BJ (cell line): ENCODE measurements at regions of chr10 and their contacts with region 1.

Region 1: DNA sequence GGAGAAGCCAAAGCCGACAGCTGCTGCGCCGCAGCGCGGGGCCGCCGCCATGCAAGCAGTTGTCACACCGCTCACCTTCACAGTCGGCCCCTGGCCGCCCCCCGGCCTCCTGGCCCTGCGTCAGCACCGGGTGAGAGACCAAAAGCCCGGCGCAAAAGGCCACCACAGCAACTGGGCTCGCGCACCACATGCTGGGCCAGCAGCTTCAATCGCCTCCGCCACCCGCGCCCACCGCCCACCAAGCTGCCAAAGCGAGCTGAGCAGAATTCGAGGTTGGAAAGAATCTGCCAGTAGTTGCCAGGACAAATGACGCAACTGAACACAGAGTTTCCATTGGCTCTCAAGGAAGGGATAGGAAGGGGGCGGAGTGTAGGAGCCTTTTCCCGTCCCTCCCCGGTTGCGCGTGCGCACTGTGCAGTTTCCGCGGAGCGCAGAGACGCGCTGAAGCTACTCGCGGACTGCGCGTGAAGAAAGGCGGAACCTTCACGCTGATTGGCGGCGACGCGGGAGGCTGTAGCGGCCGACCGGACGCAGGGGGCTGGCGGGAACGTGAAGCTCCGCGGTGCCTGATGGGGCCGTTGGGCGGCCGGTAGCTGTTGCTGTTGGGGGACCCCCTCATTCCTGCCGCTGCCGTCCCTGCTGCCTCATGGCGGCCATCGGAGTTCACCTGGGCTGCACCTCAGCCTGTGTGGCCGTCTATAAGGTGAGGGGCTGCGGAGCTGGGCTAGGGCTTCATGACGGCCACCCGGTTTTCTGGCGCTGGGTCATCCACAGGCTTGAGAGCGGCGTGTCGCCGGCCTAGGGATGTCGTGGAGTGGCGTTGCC is at the starts of genes CDNF, HSPA14 and MSANTD7:
- DNase-seq: peak; percentile 96
- H3K4me3 ChIP-seq: peak within 1 kb of the TSS; percentile 84
- H3K27me3 ChIP-seq: no peaks in the 10 kb centered on the region
- CTCF ChIP-seq: no peak; the same call in 1 of the 2 replicates
- polyA plus RNA-seq, gene CDNF: 1.0 and 1.1 TPM in 2 replicates
- polyA plus RNA-seq, gene HSPA14: 5.4 and 10.0 TPM in 2 replicates
- polyA plus RNA-seq, gene MSANTD7: 4.2 and 5.1 TPM in 2 replicates

Region 2: DNA sequence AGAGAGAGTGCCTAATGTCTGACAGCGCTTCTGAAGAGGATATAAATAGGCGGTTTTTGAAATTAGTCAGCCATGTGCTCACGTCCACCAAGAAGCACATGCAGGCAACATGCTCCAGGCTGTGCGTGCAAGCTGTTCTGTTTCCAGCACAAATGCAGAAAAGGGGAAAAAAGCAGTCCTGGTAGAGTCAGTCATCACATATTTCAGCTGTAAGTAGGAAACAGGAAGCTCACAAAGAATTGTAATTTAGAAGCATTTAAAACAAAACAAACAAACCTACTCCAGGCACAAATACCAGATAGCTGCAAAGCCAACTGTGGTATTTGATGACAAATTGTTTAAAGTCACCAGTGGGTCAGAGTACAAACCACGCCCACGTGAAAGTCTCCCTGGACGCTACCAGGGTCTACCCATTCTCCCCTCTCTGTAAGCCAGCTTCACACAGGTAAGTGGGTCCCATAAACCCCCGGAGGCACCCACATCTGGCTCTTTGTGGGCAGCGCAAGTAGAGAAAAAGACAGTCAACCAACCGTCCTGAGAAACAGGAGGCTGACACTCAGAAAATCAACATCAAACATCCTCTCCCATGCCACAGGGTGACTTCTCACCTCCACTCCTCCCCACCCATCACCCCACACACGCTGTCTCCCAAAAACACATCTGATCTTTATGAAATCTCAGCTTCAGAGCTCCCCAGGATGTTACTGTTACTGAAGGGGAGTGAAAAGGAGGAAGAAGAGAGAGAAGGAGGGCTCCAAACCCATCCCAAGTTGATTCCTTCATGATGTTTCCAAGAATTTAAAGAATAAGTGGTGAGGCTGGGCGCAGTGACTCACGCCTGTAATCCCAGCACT is 249.7 kb before region 1 on chr10:
- CTCF ChIA-PET with region 1: no interaction called
- POLR2A ChIA-PET with region 1: interaction called, 11 read pairs
- DNase-seq: peak; percentile 99
- H3K4me3 ChIP-seq: peak overlapping the region; percentile 16; the same call in 1 of the 2 replicates
- H3K27me3 ChIP-seq: no peaks in the 10 kb centered on the region
- CTCF ChIP-seq: no peak

Region 3: GRCh38 chr10:15053061-15053460 is 215.1 kb after region 1 on chr10:
- CTCF ChIA-PET with region 1: no interaction called
- POLR2A ChIA-PET with region 1: no interaction called
- DNase-seq: no peak
- H3K4me3 ChIP-seq: no peak overlapping the region
- H3K27me3 ChIP-seq: peaks cover 2% of the 10 kb centered on the region
- CTCF ChIP-seq: no peak